Caco-2 (cell line): ENCODE measurements at regions of chr12 and their contacts with region 1.

Region 1: GRCh38 chr12:10673660-10674384 is at the start of gene STYK1:
- DNase-seq: peak; percentile 86 to 92
- H3K4me3 ChIP-seq: peak within 1 kb of the TSS; percentile 60
- H3K4me3 Mint-ChIP-seq: peak within 1 kb of the TSS; percentile 76
- H3K27ac Mint-ChIP-seq: peak within 1 kb of the TSS; percentile 58
- H3K4me1 ChIP-seq: peaks cover 3% of the 10 kb centered on the region; the same call in 1 of the 2 replicates
- H3K4me1 Mint-ChIP-seq: peaks cover 7% of the 10 kb centered on the region
- H3K27me3 ChIP-seq: no peaks in the 10 kb centered on the region
- H3K27me3 Mint-ChIP-seq: peaks cover 3% of the 10 kb centered on the region
- CTCF ChIP-seq: peak; percentile 98 to 99
- total RNA-seq, gene STYK1: 4.5 and 4.9 TPM in 2 replicates

Region 2: DNA sequence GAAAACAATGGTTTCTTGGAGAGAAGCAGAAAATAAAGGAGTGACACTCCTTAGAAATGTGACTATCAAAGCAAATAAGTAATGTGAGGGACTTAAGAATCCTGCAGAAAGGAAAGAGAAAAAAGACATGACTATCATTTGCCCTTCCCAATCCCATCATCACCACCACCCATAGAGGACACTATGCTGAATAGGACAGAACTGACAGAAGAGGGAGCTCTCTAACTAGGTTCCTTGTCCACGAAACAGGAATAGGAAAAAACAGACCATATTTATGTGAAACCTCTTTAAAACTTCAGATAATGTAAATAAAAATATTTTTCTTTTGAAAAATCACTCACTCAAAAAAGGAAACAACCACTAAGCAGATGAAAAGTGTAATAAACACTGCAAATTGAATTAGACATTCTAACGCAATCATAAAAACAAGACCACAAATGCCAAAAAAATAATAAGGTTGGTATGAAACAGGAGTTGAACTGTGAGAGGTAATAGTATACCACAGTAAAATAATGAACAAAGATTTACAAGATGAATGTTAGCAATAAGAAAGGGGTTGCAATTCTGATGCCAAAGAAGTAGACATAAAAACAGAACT is 342.1 kb before region 1 on chr12:
- CTCF ChIA-PET with region 1: no interaction called
- POLR2A ChIA-PET with region 1: no interaction called
- intact Hi-C with region 1: loop called (anchors 1 kb)
- DNase-seq: peak in 1 of 2 experiments; percentile 65
- H3K4me3 ChIP-seq: no peak overlapping the region
- H3K4me3 Mint-ChIP-seq: no peak overlapping the region
- H3K27ac Mint-ChIP-seq: no peak overlapping the region
- H3K4me1 ChIP-seq: no peaks in the 10 kb centered on the region
- H3K4me1 Mint-ChIP-seq: peaks cover 24% of the 10 kb centered on the region
- H3K27me3 ChIP-seq: no peaks in the 10 kb centered on the region
- H3K27me3 Mint-ChIP-seq: no peaks in the 10 kb centered on the region
- CTCF ChIP-seq: peak; percentile 92 to 96

Region 3: GRCh38 chr12:10409387-10409786 is 264.4 kb before region 1 on chr12 and contains the start of gene KLRC4:
- CTCF ChIA-PET with region 1: no interaction called
- POLR2A ChIA-PET with region 1: no interaction called
- intact Hi-C with region 1: loop called (anchors 1 kb)
- DNase-seq: no peak
- H3K4me3 ChIP-seq: no peak within 1 kb of the TSS
- H3K4me3 Mint-ChIP-seq: no peak within 1 kb of the TSS
- H3K27ac Mint-ChIP-seq: no peak within 1 kb of the TSS
- H3K4me1 ChIP-seq: no peaks in the 10 kb centered on the region
- H3K4me1 Mint-ChIP-seq: peaks cover 5% of the 10 kb centered on the region
- H3K27me3 ChIP-seq: no peaks in the 10 kb centered on the region
- H3K27me3 Mint-ChIP-seq: no peaks in the 10 kb centered on the region
- CTCF ChIP-seq: no peak
- total RNA-seq, gene KLRC4: not detected in 2 replicates

Region 4: GRCh38 chr12:10453144-10453543 is 220.7 kb before region 1 on chr12 and contains the start of gene KLRC1:
- CTCF ChIA-PET with region 1: no interaction called
- POLR2A ChIA-PET with region 1: no interaction called
- intact Hi-C with region 1: no loop called
- DNase-seq: no peak
- H3K4me3 ChIP-seq: no peak within 1 kb of the TSS
- H3K4me3 Mint-ChIP-seq: no peak within 1 kb of the TSS
- H3K27ac Mint-ChIP-seq: no peak within 1 kb of the TSS
- H3K4me1 ChIP-seq: no peaks in the 10 kb centered on the region
- H3K4me1 Mint-ChIP-seq: no peaks in the 10 kb centered on the region
- H3K27me3 ChIP-seq: no peaks in the 10 kb centered on the region
- H3K27me3 Mint-ChIP-seq: no peaks in the 10 kb centered on the region
- CTCF ChIP-seq: no peak
- total RNA-seq, gene KLRC1: not detected in 2 replicates

Region 5: DNA sequence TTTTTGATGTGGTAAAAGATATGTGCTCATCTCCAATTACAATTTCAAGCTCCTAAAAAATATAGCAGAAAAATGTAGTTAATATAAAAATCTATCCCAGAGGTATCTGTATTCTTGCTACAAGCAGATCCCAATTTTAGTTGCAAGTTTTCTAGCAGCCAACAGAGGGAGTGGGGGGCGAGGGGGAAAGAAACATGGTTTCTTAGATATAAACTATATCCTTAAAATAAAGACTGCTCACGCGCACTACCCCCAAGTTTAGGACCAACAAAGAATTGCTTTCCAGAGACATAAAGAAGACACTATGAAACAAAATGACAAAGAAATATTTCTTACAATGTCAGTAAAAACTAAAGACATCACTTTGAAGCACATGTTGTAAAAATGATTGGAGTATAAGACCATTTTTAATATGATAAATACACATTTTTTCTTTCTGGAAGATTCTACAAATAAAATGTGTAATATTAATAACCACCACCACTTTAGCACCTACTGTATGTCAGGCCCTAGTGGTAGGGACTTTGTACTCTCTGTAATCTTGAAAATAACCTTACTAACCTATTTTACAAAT is 65.8 kb before region 1 on chr12:
- CTCF ChIA-PET with region 1: no interaction called
- POLR2A ChIA-PET with region 1: no interaction called
- intact Hi-C with region 1: loop called (anchors 1 kb)
- DNase-seq: peak in 1 of 2 experiments; percentile 50
- H3K4me3 ChIP-seq: no peak overlapping the region
- H3K4me3 Mint-ChIP-seq: no peak overlapping the region
- H3K27ac Mint-ChIP-seq: no peak overlapping the region
- H3K4me1 ChIP-seq: peaks cover 5% of the 10 kb centered on the region; the same call in 1 of the 2 replicates
- H3K4me1 Mint-ChIP-seq: peaks cover 14% of the 10 kb centered on the region
- H3K27me3 ChIP-seq: no peaks in the 10 kb centered on the region
- H3K27me3 Mint-ChIP-seq: no peaks in the 10 kb centered on the region
- CTCF ChIP-seq: peak; percentile 57 to 61

Region 6: GRCh38 chr12:10632216-10632615 is 41.6 kb before region 1 on chr12:
- CTCF ChIA-PET with region 1: no interaction called
- POLR2A ChIA-PET with region 1: interaction called, 7 read pairs
- intact Hi-C with region 1: loop called (anchors 2 kb)
- DNase-seq: no peak
- H3K4me3 ChIP-seq: no peak overlapping the region
- H3K4me3 Mint-ChIP-seq: no peak overlapping the region
- H3K27ac Mint-ChIP-seq: no peak overlapping the region
- H3K4me1 ChIP-seq: peaks cover 40% of the 10 kb centered on the region
- H3K4me1 Mint-ChIP-seq: peaks cover 41% of the 10 kb centered on the region
- H3K27me3 ChIP-seq: no peaks in the 10 kb centered on the region
- H3K27me3 Mint-ChIP-seq: no peaks in the 10 kb centered on the region
- CTCF ChIP-seq: no peak